MCF 10A (cell line): ENCODE measurements at regions of chr11 and their contacts with region 1.

Region 1: GRCh38 chr11:107293677-107294344 is 163.8 kb downstream of the CWF19L2 start:
- DNase-seq: no peak
- H3K4me3 Mint-ChIP-seq: no peak overlapping the region
- H3K27ac Mint-ChIP-seq: no peak overlapping the region
- H3K4me1 Mint-ChIP-seq: no peaks in the 10 kb centered on the region
- H3K27me3 Mint-ChIP-seq: no peaks in the 10 kb centered on the region
- CTCF ChIP-seq: no peak

Region 2: DNA sequence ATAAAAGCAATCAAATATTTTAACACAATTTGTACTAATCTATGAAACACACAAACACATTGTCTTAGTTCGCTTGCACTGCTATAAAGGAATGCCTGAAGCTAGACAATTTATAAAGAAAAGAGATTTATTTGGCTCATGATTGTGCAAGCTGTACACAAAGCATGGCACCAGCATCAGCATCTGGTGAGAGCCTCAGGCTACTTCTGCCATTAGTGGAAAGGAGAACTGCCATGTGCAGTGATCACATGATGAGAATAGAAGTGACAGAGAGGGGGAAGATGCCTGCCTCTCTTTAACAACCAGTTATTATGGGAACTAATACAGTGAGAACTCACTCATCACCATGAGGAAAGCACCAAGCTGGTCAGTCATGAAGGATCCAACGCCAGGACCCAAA is 380.7 kb before region 1 on chr11:
- CTCF ChIA-PET with region 1: no interaction called
- POLR2A ChIA-PET with region 1: no interaction called
- intact Hi-C with region 1: no loop called
- DNase-seq: no peak
- H3K4me3 Mint-ChIP-seq: no peak overlapping the region
- H3K27ac Mint-ChIP-seq: no peak overlapping the region
- H3K4me1 Mint-ChIP-seq: no peaks in the 10 kb centered on the region
- H3K27me3 Mint-ChIP-seq: no peaks in the 10 kb centered on the region
- CTCF ChIP-seq: no peak

Region 3: DNA sequence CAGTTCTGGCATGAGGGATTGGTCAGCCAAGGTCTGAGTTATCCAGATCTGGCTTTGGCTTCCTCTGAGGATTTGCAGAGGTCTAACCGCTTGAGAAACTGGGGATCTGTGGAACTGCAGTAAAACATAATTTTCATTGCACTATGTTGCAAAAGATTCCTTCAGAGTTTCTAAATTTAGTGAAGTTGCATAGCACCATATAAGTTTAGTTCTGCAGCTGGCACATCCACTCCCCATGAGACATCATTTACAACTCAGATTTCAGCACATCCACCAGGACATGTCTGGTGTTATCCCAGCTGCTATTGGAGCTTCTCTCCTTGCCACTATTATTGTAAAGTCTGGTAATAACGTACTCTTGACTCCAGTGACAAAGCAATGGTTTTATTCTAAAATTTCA is 17.7 kb before region 1 on chr11:
- CTCF ChIA-PET with region 1: no interaction called
- POLR2A ChIA-PET with region 1: no interaction called
- intact Hi-C with region 1: loop called (anchors 2 kb)
- DNase-seq: no peak
- H3K4me3 Mint-ChIP-seq: no peak overlapping the region
- H3K27ac Mint-ChIP-seq: no peak overlapping the region
- H3K4me1 Mint-ChIP-seq: no peaks in the 10 kb centered on the region
- H3K27me3 Mint-ChIP-seq: no peaks in the 10 kb centered on the region
- CTCF ChIP-seq: no peak

Region 4: GRCh38 chr11:107337917-107338316 is 44.1 kb after region 1 on chr11:
- CTCF ChIA-PET with region 1: no interaction called
- POLR2A ChIA-PET with region 1: no interaction called
- intact Hi-C with region 1: no loop called
- DNase-seq: no peak
- H3K4me3 Mint-ChIP-seq: no peak overlapping the region
- H3K27ac Mint-ChIP-seq: no peak overlapping the region
- H3K4me1 Mint-ChIP-seq: no peaks in the 10 kb centered on the region
- H3K27me3 Mint-ChIP-seq: no peaks in the 10 kb centered on the region
- CTCF ChIP-seq: no peak